BJ (cell line): ENCODE measurements at regions of chrX and their contacts with region 1.

Region 1: DNA sequence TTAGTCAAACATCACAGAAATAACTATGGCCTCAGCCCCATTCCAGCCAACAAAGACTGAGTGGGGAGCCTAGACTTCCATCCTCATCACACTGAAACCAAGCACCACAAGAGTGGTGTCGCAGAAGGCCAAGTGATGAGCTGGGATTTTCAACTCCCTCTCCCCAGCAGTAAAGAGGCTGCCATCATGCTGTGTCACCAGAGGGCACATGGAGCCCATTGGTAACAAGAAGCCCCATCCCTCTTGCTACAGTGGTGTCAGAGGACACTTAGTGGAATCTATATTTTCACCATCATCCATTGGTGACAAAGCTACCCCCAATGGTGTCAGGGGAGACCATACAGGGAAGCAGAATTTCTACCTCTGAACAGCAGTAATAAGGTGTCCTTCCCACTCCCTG is 198.7 kb downstream of the IDS start:
- DNase-seq: no peak
- H3K4me3 ChIP-seq: no peak overlapping the region
- H3K27me3 ChIP-seq: no peaks in the 10 kb centered on the region
- CTCF ChIP-seq: 0 out of 2 replicates have a peak, but pooled peaks have one; percentile 14

Region 2: DNA sequence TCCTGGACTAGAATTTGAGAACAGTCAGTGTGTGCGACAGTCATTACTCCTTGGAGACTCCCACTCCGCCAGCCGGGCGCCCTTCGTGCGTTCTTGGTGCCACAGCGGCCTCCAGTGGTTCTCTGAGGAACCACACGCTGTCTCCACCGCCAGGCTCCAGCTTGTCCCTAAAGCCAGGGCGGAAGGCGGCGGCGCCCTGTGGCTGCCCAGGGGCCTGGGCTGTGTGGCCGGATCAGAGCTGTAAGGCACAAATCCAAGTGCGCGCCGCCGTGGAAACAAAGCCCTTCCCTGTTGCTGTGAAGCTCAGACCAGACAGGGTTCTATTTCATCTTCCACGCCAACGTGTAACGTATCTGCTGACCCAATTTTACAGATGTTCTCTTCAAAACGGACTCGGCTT is 164.5 kb after region 1 on chrX:
- CTCF ChIA-PET with region 1: interaction called, 30 read pairs
- POLR2A ChIA-PET with region 1: no interaction called
- DNase-seq: no peak
- H3K4me3 ChIP-seq: peak overlapping the region; percentile 11; the same call in 1 of the 2 replicates
- H3K27me3 ChIP-seq: no peaks in the 10 kb centered on the region
- CTCF ChIP-seq: peak; percentile 80